Naive thymus-derived CD4-positive, alpha-beta T cell (primary cell): ENCODE measurements at regions of chr5 and their contacts with region 1.

Region 1: DNA sequence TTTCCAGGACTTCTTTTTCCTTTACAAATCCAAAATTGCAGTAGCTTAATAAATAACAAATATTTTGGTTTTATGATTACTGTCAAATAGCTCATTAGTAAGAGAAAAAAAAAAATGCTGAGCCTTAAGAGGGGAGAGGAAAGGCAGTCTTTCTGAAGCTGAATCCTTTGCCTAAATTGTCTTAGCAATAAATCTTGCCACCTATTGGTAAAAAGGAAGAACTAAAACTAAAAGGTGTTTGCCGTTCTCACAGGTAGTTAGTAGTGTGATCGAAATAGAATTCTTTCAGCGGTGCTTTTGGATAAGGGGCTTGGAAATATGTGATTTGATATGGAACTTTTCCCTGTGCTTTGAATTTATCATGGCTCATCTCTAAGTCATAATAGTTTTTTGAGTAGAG is 31.2 kb downstream of the PIK3R1 start:
- DNase-seq: peak in 6 of 9 donors; percentile 29 to 60 (median 46)
- ATAC-seq: no peak
- H3K4me3 ChIP-seq: no peak overlapping the region
- H3K4me3 Mint-ChIP-seq: peak overlapping the region in 3 of 10 donors; percentile 7 to 25 (median 16)
- H3K27ac ChIP-seq: no peak overlapping the region
- H3K27ac Mint-ChIP-seq: peak overlapping the region in 7 of 9 donors; percentile 18 to 67 (median 65)
- H3K4me1 ChIP-seq: peaks cover 36 to 59% of the 10 kb centered on the region in 2 donors
- H3K4me1 Mint-ChIP-seq: peaks cover 58 to 94% (median 88%) of the 10 kb centered on the region in 7 donors
- H3K27me3 ChIP-seq: no peaks in the 10 kb centered on the region
- H3K27me3 Mint-ChIP-seq: no peaks in the 10 kb centered on the region

Region 2: DNA sequence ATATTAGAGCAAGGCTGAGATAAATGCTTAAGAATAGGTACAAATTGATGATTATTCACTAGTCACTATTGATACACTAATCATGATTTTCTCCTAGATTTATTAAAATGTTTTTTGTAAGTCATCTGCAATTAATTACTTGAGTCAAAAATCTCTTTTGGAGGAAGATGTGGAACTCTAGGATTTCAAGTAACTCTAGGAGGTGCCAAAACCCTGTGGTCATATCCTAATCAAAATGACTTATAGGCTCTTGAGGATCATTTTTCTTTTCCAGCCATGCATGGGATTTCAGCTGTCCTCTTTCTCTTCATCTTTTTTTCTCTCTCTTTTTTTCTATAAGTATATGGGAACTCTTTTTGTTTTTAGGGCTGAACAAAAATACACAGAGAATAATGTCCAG is 908.4 kb before region 1 on chr5:
- CTCF ChIA-PET with region 1: no interaction called
- POLR2A ChIA-PET with region 1: no interaction called
- intact Hi-C with region 1: loop called in 1 of 2 experiments (anchors 1 kb)
- DNase-seq: no peak
- ATAC-seq: no peak
- H3K4me3 ChIP-seq: no peak overlapping the region
- H3K4me3 Mint-ChIP-seq: no peak overlapping the region
- H3K27ac ChIP-seq: no peak overlapping the region
- H3K27ac Mint-ChIP-seq: no peak overlapping the region
- H3K4me1 ChIP-seq: no peaks in the 10 kb centered on the region
- H3K4me1 Mint-ChIP-seq: peaks cover 0 to 2% (median 0%) of the 10 kb centered on the region in 7 donors
- H3K27me3 ChIP-seq: no peaks in the 10 kb centered on the region
- H3K27me3 Mint-ChIP-seq: peaks cover 0 to 19% (median 9%) of the 10 kb centered on the region in 5 donors

Region 3: GRCh38 chr5:68041293-68041692 is 205.5 kb before region 1 on chr5:
- CTCF ChIA-PET with region 1: no interaction called
- POLR2A ChIA-PET with region 1: no interaction called
- intact Hi-C with region 1: no loop called
- DNase-seq: no peak
- ATAC-seq: peak; percentile 60
- H3K4me3 ChIP-seq: no peak overlapping the region
- H3K4me3 Mint-ChIP-seq: no peak overlapping the region
- H3K27ac ChIP-seq: no peak overlapping the region
- H3K27ac Mint-ChIP-seq: no peak overlapping the region
- H3K4me1 ChIP-seq: no peaks in the 10 kb centered on the region
- H3K4me1 Mint-ChIP-seq: no peaks in the 10 kb centered on the region
- H3K27me3 ChIP-seq: no peaks in the 10 kb centered on the region
- H3K27me3 Mint-ChIP-seq: peaks cover 0 to 7% (median 0%) of the 10 kb centered on the region in 5 donors

Region 4: DNA sequence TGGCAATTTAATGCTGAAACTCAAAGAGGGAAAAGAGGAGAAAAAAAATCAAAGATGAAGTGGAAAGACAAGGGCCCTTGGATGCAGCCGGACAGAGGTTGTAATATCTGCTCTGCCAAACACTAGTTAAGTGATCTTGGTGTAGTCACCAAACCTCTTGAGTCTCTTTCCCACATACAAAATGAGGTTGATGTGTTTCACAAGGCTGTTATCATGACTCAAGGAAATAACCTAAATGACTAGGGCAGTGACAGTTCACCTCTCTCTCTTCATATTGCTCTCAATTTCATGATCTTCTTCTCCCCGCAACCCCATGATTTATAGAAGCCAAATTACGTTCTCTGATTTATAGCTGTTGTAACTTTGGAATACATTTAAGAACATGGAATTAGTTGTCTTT is 13.7 kb after region 1 on chr5:
- CTCF ChIA-PET with region 1: interaction called, 3 read pairs
- POLR2A ChIA-PET with region 1: interaction called, 5 read pairs
- intact Hi-C with region 1: loop called in 1 of 2 experiments (anchors 1 kb)
- DNase-seq: no peak
- ATAC-seq: no peak
- H3K4me3 ChIP-seq: no peak overlapping the region
- H3K4me3 Mint-ChIP-seq: peak overlapping the region in 3 of 10 donors; percentile 16 to 76 (median 19)
- H3K27ac ChIP-seq: no peak overlapping the region
- H3K27ac Mint-ChIP-seq: peak overlapping the region in 8 of 9 donors; percentile 23 to 95 (median 76)
- H3K4me1 ChIP-seq: peaks cover 64 to 81% of the 10 kb centered on the region in 2 donors
- H3K4me1 Mint-ChIP-seq: peaks cover 53 to 91% (median 90%) of the 10 kb centered on the region in 7 donors
- H3K27me3 ChIP-seq: no peaks in the 10 kb centered on the region
- H3K27me3 Mint-ChIP-seq: no peaks in the 10 kb centered on the region